Activated CD4-positive, alpha-beta memory T cell treated with anti-CD3 and anti-CD28 coated beads for 36 hours (primary cell): ENCODE measurements at regions of chr21 and their contacts with region 1.

Region 1: DNA sequence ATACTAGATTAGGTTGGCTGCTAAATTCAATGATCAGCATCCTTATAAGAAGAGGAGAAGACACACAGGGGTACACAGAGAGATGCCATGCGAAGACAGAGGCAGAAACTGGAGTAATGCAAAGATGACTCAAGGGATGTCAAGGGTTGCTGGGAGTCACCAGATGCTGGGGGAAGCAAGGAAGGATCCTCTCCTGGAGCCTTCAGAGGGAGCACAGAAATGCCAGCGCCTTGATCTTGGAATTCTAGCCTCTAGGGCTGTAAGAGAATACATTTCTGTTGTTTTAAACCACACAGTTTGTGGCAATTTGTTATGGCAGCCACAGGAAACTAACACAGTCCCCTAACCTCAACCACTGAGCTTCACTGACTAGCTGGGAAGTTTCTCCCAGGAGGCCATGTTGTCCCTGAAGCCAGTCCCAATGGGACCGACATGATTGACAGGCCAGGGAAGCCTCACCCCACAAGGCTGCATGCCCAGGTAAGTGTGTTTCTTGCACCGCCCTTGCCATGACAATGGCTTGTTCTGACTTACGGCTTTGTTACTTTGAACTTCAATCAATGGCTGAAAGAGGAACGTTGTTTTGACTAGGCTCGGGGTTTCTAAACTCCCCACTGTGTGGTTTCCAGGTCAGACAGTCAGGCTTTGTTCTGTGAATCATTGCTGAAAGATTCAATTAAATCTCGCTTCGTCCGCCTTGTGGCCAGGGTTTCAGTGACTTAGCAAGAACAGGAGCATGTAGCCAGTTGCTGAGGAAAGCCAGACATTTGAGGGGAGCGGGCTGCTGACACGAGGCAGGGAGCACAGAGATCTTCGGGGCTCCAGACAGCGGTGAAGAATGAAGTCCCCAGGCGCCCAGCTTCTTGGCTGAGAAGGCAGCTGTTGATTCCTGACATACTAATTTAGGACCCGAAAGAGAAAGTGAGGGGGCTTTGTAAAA is 62.3 kb downstream of the RUNX1 start:
- DNase-seq: peak; percentile 92
- H3K4me3 Mint-ChIP-seq: peak overlapping the region; percentile 67
- H3K27ac Mint-ChIP-seq: peak overlapping the region; percentile 90
- H3K4me1 Mint-ChIP-seq: peaks cover 95% of the 10 kb centered on the region
- H3K27me3 Mint-ChIP-seq: no peaks in the 10 kb centered on the region

Region 2: GRCh38 chr21:34695434-34696119 is 291.3 kb before region 1 on chr21:
- CTCF ChIA-PET with region 1: no interaction called
- POLR2A ChIA-PET with region 1: no interaction called
- intact Hi-C with region 1: no loop called
- DNase-seq: no peak
- H3K4me3 Mint-ChIP-seq: no peak overlapping the region
- H3K27ac Mint-ChIP-seq: no peak overlapping the region
- H3K4me1 Mint-ChIP-seq: peaks cover 4% of the 10 kb centered on the region
- H3K27me3 Mint-ChIP-seq: peaks cover 23% of the 10 kb centered on the region

Region 3: GRCh38 chr21:34795175-34795547 is 191.7 kb before region 1 on chr21:
- CTCF ChIA-PET with region 1: no interaction called
- POLR2A ChIA-PET with region 1: no interaction called
- intact Hi-C with region 1: no loop called
- DNase-seq: no peak
- H3K4me3 Mint-ChIP-seq: no peak overlapping the region
- H3K27ac Mint-ChIP-seq: peak overlapping the region; percentile 35
- H3K4me1 Mint-ChIP-seq: no peaks in the 10 kb centered on the region
- H3K27me3 Mint-ChIP-seq: no peaks in the 10 kb centered on the region

Region 4: GRCh38 chr21:34807146-34807880 is 179.5 kb before region 1 on chr21:
- CTCF ChIA-PET with region 1: no interaction called
- POLR2A ChIA-PET with region 1: interaction called, 3 read pairs
- intact Hi-C with region 1: loop called (anchors 2 kb)
- DNase-seq: peak; percentile 85
- H3K4me3 Mint-ChIP-seq: peak overlapping the region; percentile 57
- H3K27ac Mint-ChIP-seq: peak overlapping the region; percentile 89
- H3K4me1 Mint-ChIP-seq: peaks cover 89% of the 10 kb centered on the region
- H3K27me3 Mint-ChIP-seq: no peaks in the 10 kb centered on the region

Region 5: GRCh38 chr21:34946916-34947534 is 39.8 kb before region 1 on chr21:
- CTCF ChIA-PET with region 1: interaction called, 8 read pairs
- POLR2A ChIA-PET with region 1: interaction called, 11 read pairs
- intact Hi-C with region 1: loop called (anchors 1 kb)
- DNase-seq: no peak
- H3K4me3 Mint-ChIP-seq: no peak overlapping the region
- H3K27ac Mint-ChIP-seq: peak overlapping the region; percentile 88
- H3K4me1 Mint-ChIP-seq: peaks cover 90% of the 10 kb centered on the region
- H3K27me3 Mint-ChIP-seq: no peaks in the 10 kb centered on the region

Region 6: DNA sequence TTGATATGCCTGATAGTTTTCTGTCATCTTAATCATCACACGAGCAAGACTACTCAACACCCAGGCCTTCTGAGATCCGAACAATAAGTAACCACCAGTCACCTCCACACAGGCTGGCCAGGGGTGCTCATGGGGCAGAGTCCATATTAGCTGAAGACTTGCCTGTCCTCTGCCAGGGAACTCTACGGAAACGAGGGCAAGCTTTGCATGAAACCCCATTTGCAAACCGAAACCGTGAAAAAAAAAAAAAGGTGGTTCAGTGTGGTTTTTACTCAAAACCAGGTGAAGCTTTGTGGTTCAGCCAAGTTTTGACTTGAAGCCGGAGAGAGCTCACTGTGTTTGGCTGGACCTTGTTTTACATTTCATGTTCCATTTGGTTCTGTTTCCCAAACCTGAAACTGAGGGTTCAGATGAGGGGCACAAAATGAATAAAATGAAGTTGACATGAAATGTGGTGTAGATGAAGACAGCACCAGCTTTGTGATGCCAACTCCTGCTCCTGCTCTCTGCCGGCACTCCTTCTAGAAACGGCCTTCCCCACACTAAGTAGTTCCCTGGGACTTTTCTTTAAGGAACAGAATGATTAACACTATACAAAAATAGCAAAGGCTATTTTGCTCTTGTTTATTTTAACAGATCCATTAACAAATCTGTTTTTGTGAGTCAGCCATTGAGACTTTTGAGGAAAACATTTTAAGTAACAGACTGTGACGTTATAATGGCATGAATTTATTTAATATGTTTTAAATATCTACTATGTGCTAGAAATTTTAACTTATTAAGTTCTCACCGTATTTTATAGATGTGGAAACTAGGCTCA is 12.5 kb before region 1 on chr21:
- CTCF ChIA-PET with region 1: interaction called, 9 read pairs
- POLR2A ChIA-PET with region 1: interaction called, 52 read pairs
- intact Hi-C with region 1: loop called (anchors 1 kb)
- DNase-seq: peak; percentile 72
- H3K4me3 Mint-ChIP-seq: peak overlapping the region; percentile 70
- H3K27ac Mint-ChIP-seq: peak overlapping the region; percentile 81
- H3K4me1 Mint-ChIP-seq: peaks cover 80% of the 10 kb centered on the region
- H3K27me3 Mint-ChIP-seq: no peaks in the 10 kb centered on the region

Region 7: GRCh38 chr21:35020902-35021301 is 34.1 kb after region 1 on chr21:
- CTCF ChIA-PET with region 1: interaction called, 11 read pairs
- POLR2A ChIA-PET with region 1: interaction called, 28 read pairs
- intact Hi-C with region 1: loop called (anchors 1 kb)
- DNase-seq: no peak
- H3K4me3 Mint-ChIP-seq: no peak overlapping the region
- H3K27ac Mint-ChIP-seq: peak overlapping the region; percentile 65
- H3K4me1 Mint-ChIP-seq: peaks cover 85% of the 10 kb centered on the region
- H3K27me3 Mint-ChIP-seq: no peaks in the 10 kb centered on the region

Region 8: GRCh38 chr21:35045542-35046262 is 58.9 kb after region 1 on chr21:
- CTCF ChIA-PET with region 1: interaction called, 19 read pairs
- POLR2A ChIA-PET with region 1: interaction called, 72 read pairs
- intact Hi-C with region 1: loop called (anchors 1 kb)
- DNase-seq: peak; percentile 69
- H3K4me3 Mint-ChIP-seq: peak overlapping the region; percentile 93
- H3K27ac Mint-ChIP-seq: peak overlapping the region; percentile 99
- H3K4me1 Mint-ChIP-seq: peaks cover 94% of the 10 kb centered on the region
- H3K27me3 Mint-ChIP-seq: no peaks in the 10 kb centered on the region